Aorta (tissue), 5 donors: ENCODE measurements at regions of chr18 and their contacts with region 1.

Region 1: DNA sequence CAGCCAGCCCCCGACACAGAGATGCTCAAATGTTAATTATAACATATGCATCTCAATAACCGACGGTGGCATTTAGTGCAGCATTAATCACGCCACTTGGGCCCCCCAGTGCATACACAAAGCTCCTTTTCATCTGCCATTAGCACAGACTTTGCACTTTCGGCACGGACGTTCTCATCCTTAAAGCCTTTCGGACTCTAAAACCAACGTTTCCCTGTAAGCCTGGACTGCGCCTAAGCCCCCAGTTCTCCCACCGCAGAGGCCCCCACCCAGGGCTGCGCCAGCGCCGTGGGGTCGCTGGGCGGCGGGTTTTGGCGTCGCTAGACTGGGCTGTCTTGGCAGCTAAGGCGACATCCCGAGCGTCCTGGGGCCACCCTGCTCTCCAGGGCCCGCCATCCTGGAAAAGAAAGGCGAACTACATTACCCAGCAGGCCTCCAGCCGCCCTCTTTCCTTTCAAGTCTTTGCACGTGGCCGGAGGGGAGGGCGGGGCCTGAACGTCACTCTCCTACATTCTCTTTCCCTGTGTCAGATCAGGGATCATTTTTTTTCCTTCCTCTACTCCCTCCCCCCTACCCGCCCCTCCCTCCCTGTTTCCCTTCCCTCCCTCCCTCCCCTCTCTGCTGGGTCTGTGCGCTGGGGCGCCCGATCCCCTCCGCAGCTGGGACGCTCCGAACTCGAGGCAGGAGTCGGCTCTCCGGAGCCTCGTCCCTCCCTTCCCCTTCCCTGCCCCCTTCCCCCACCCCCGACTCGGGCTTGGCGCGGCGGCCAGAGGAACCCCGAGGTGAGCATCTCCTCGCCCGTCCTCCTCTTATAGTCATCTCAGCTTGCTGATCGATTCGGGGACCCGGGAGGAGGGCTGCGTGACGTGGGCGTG is at the start of gene CTIF:
- DNase-seq: peak; percentile 98
- ATAC-seq: peak; percentile 93
- H3K4me3 ChIP-seq: peak within 1 kb of the TSS; percentile 77 to 79
- H3K27ac ChIP-seq: peak within 1 kb of the TSS; percentile 53 to 58
- H3K4me1 ChIP-seq: no peaks in the 10 kb centered on the region
- H3K27me3 ChIP-seq: no peaks in the 10 kb centered on the region
- total RNA-seq, gene CTIF: 87.1 to 113 TPM

Region 2: GRCh38 chr18:48374423-48375149 is 164.2 kb before region 1 on chr18:
- intact Hi-C with region 1: no loop called
- DNase-seq: no peak
- ATAC-seq: peak; percentile 21
- H3K4me3 ChIP-seq: no peak overlapping the region
- H3K27ac ChIP-seq: peak overlapping the region in 1 of 2 donors; percentile 17
- H3K4me1 ChIP-seq: no peaks in the 10 kb centered on the region
- H3K27me3 ChIP-seq: no peaks in the 10 kb centered on the region

Region 3: GRCh38 chr18:48488388-48488850 is 50.3 kb before region 1 on chr18:
- intact Hi-C with region 1: loop called (anchors 2 to 5 kb)
- DNase-seq: peak; percentile 91 to 93
- ATAC-seq: peak; percentile 72
- H3K4me3 ChIP-seq: no peak overlapping the region
- H3K27ac ChIP-seq: peak overlapping the region in 1 of 2 donors; percentile 32
- H3K4me1 ChIP-seq: peaks cover 3 to 7% of the 10 kb centered on the region in 2 donors
- H3K27me3 ChIP-seq: no peaks in the 10 kb centered on the region

Region 4: DNA sequence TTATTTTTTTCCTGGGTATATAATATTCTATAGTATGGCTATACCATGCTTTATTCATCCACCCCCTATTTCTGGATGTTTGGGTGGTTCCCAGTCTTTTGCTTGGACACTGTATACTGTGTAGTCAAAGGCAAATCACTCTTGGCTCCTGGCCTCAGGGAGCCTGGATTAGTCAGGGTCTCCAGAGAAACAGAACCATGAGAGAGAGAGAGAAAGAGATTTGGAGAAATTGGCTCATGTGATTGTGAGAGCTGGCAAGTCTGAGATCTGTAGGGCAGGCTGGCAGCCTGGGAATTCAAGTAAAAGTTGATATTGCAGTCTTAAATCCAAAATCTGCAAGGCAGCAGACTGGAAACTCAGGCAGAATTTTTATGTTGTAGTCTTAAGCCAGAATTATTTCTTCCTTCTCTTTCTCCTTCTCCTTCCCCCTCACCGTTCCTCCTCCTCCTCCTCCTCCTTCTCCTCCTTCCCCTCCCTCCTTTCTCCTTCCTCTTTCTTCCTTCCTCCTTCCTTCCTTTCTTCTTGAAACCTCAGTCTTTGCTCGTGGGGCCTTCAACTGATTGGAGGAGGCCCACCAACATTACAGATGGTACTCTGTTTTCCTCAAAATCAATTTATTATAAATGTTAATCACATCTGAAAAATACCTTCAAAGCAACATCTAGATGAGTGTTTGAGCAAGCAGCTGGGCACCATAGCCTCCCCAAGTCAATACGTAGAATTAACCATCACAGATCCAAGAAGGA is 33.0 kb after region 1 on chr18:
- intact Hi-C with region 1: loop called in 1 of 2 experiments (anchors 1 kb)
- DNase-seq: peak in 1 of 2 donors; percentile 34
- ATAC-seq: peak; percentile 36
- H3K4me3 ChIP-seq: no peak overlapping the region
- H3K27ac ChIP-seq: no peak overlapping the region
- H3K4me1 ChIP-seq: no peaks in the 10 kb centered on the region
- H3K27me3 ChIP-seq: no peaks in the 10 kb centered on the region

Region 5: GRCh38 chr18:48590678-48591077 is 51.9 kb after region 1 on chr18:
- intact Hi-C with region 1: loop called in 1 of 2 experiments (anchors 5 kb)
- DNase-seq: peak in 1 of 2 donors; percentile 73
- ATAC-seq: no peak
- H3K4me3 ChIP-seq: no peak overlapping the region
- H3K27ac ChIP-seq: peak overlapping the region in 1 of 2 donors; percentile 12
- H3K4me1 ChIP-seq: peaks cover 0 to 5% of the 10 kb centered on the region in 2 donors
- H3K27me3 ChIP-seq: no peaks in the 10 kb centered on the region

Region 6: DNA sequence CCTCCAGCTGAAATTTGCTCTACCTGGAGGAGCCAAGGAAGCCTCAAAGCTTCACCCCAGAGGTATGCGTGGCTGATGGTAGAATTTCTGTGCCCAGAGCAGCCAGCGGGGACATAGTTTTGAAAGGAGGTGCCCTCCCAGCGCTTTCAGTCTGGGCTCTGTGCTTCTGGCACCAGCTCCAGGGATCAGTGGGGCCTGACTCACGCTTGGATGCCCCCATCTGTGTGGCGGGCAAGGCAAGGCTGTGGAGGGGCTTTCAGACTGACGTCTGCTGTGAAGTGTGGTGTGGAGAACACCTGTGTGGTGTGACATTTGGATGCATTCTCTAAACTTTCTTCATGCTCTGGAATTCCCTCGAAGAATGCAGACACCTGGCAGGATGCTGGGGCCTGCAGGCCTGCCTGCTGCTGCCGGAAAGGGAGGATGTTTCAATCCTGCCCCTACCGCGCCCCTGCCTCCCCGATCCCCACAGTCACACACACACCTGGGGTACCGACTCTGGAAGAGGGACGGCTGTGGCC is 84.2 kb after region 1 on chr18:
- intact Hi-C with region 1: loop called in 1 of 2 experiments (anchors 2 kb)
- DNase-seq: peak; percentile 75 to 84
- ATAC-seq: no peak
- H3K4me3 ChIP-seq: no peak overlapping the region
- H3K27ac ChIP-seq: peak overlapping the region in 1 of 2 donors; percentile 65
- H3K4me1 ChIP-seq: peaks cover 2 to 9% of the 10 kb centered on the region in 2 donors
- H3K27me3 ChIP-seq: no peaks in the 10 kb centered on the region

Region 7: DNA sequence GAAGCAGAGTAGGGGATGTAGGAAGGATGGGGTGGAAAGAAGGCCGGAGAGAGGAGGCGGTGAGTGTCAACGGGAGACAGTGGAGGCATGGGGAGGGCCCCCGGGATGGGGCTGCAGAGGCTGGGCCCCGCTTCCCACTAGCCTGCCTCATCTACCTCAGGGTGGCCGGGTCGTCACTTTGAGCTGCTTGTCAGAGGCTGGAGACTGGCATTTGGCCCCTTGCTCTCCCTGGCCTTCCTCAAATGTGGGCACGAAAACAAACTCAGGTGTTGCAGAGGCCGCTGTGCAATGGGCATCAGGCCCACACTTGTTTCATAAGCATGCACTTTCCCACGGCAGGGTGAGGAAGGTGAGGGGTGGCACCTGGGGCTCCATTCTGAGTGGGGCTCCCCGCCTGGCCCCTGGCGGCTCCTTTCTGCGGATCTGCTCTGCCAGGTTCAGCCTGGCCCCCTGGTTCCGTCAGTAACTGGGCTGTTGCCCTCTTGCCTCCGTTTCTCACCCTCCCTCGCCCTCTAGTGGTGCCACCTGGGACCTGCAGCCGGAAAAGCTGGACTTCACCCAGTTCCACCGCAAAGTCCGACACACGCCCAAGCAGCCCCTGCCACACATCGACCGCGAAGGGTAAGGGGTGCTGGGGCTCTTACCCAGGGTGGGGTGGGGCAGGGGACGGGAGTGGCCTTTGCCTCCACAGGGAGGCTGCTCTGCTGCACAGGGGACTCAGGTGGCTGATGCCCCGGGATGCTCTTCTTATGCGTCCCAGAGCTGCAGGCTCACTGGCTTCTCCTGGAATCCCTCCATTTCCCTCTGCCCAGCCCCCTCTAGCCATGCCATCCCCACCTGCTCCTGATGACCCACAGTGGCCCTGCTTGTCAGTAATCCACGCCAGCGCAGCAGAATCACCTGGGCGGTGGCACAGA is 125.4 kb after region 1 on chr18:
- intact Hi-C with region 1: loop called in 1 of 2 experiments (anchors 5 kb)
- DNase-seq: peak; percentile 80 to 93
- ATAC-seq: peak; percentile 78
- H3K4me3 ChIP-seq: no peak overlapping the region
- H3K27ac ChIP-seq: no peak overlapping the region
- H3K4me1 ChIP-seq: no peaks in the 10 kb centered on the region
- H3K27me3 ChIP-seq: no peaks in the 10 kb centered on the region

Region 8: GRCh38 chr18:48842259-48843061 is 303.7 kb after region 1 on chr18:
- intact Hi-C with region 1: no loop called
- DNase-seq: peak; percentile 44 to 75
- ATAC-seq: peak; percentile 28
- H3K4me3 ChIP-seq: no peak overlapping the region
- H3K27ac ChIP-seq: no peak overlapping the region
- H3K4me1 ChIP-seq: no peaks in the 10 kb centered on the region
- H3K27me3 ChIP-seq: no peaks in the 10 kb centered on the region